Activated T-helper 2 cell treated with anti-CD3 and anti-CD28 coated beads, Interferon-gamma antibody, Interleukin-2, Interleukin-4, amounts not matched to agents 10 μg/mL and 5 μg/mL and 100 μg/mL, durations not matched to agents 14 hours and 24 hours and 36 hours (primary cell): ENCODE measurements at regions of chr19 and their contacts with region 1.

Region 1: GRCh38 chr19:37077934-37078725 is at the start of gene ZNF420:
- DNase-seq: peak; percentile 85
- H3K4me3 Mint-ChIP-seq: peak within 1 kb of the TSS; percentile 97
- H3K27ac Mint-ChIP-seq: peak within 1 kb of the TSS; percentile 82
- H3K4me1 Mint-ChIP-seq: peaks cover 13% of the 10 kb centered on the region
- H3K27me3 Mint-ChIP-seq: no peaks in the 10 kb centered on the region
- total RNA-seq, gene ZNF420: 4.7 and 5.5 TPM in 2 replicates

Region 2: GRCh38 chr19:36915992-36916830 is 161.9 kb before region 1 on chr19 and contains the starts of genes ZNF568 and ZNF829:
- intact Hi-C with region 1: loop called (anchors 10 kb)
- DNase-seq: peak; percentile 92
- H3K4me3 Mint-ChIP-seq: peak within 1 kb of the TSS; percentile 90
- H3K27ac Mint-ChIP-seq: peak within 1 kb of the TSS; percentile 93
- H3K4me1 Mint-ChIP-seq: peaks cover 20% of the 10 kb centered on the region
- H3K27me3 Mint-ChIP-seq: no peaks in the 10 kb centered on the region
- total RNA-seq, gene ZNF568: 4.5 and 6.3 TPM in 2 replicates
- total RNA-seq, gene ZNF829: 3.4 and 3.5 TPM in 2 replicates

Region 3: GRCh38 chr19:36962346-36962745 is 115.8 kb before region 1 on chr19:
- intact Hi-C with region 1: no loop called
- DNase-seq: no peak
- H3K4me3 Mint-ChIP-seq: no peak overlapping the region
- H3K27ac Mint-ChIP-seq: no peak overlapping the region
- H3K4me1 Mint-ChIP-seq: no peaks in the 10 kb centered on the region
- H3K27me3 Mint-ChIP-seq: no peaks in the 10 kb centered on the region

Region 4: GRCh38 chr19:36973021-36973843 is 104.9 kb before region 1 on chr19:
- intact Hi-C with region 1: loop called (anchors 1 kb)
- DNase-seq: peak; percentile 58
- H3K4me3 Mint-ChIP-seq: peak overlapping the region; percentile 91
- H3K27ac Mint-ChIP-seq: peak overlapping the region; percentile 80
- H3K4me1 Mint-ChIP-seq: peaks cover 9% of the 10 kb centered on the region
- H3K27me3 Mint-ChIP-seq: no peaks in the 10 kb centered on the region

Region 5: DNA sequence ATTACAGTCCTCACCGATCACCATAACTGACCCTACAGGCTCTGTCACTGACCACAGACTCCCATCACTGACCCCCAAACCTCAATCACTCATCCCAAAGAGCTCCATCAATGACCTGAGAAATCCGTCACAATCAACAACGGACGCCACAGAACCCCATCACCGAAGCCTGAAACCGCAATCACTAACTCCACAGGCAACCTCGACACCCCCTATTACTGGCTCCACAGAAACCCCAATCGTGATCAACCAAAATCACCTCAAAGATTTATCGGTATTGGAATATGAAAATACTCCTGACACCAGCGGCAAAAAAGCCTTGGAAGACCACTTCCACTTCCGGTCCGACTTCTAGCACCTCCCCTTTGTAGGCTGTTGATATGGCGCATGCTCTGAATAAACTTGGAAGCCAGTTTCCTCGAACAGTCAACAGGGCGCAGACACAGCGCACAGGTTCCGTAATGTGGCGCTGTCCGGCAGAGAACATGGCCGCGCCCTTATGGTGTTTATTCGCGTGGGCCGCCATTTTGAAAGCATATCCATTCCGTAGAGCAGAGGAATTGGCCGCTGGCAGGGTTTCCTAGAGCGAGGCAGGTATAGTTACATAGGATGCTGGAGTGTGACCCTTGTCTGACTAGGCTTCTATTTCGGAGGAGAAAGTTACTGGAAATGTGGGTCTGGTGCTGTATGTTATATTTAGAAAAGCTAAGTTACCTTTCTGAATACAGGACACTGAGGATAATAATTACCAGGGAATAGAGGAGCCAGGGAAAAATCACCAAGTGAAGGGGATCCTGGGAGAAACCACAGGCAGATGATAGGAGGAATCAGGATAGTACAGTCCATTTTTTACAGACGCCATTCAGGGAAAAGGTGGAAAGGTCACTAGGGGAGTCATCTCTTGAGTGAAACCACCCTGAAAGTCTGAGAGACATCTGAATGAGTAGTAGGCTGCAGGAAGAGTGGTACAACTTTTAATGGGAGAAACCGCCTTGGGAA is 94.5 kb after region 1 on chr19 and contains the start of gene ZNF585A:
- intact Hi-C with region 1: loop called (anchors 1 kb)
- DNase-seq: peak; percentile 82
- H3K4me3 Mint-ChIP-seq: no peak within 1 kb of the TSS
- H3K27ac Mint-ChIP-seq: no peak within 1 kb of the TSS
- H3K4me1 Mint-ChIP-seq: no peaks in the 10 kb centered on the region
- H3K27me3 Mint-ChIP-seq: no peaks in the 10 kb centered on the region
- total RNA-seq, gene ZNF585A: 4.1 and 4.2 TPM in 2 replicates